B cell (primary cell): ENCODE measurements at regions of chr4 and their contacts with region 1.

Region 1: GRCh38 chr4:70993181-70994068 is at the start of gene DCK:
- DNase-seq: peak; percentile 92
- ATAC-seq: peak; percentile 82
- H3K4me3 ChIP-seq: peak within 1 kb of the TSS; percentile 85 to 99 (median 97)
- H3K4me3 Mint-ChIP-seq: peak within 1 kb of the TSS; percentile 97
- H3K27ac ChIP-seq: peak within 1 kb of the TSS; percentile 86 to 94
- H3K27ac Mint-ChIP-seq: peak within 1 kb of the TSS; percentile 96
- H3K4me1 ChIP-seq: peaks cover 39 to 40% of the 10 kb centered on the region in 2 donors
- H3K4me1 Mint-ChIP-seq: peaks cover 52% of the 10 kb centered on the region
- H3K27me3 ChIP-seq: no peaks in the 10 kb centered on the region
- H3K27me3 Mint-ChIP-seq: no peaks in the 10 kb centered on the region
- CTCF ChIP-seq: no peak
- total RNA-seq, gene DCK: 58.2 and 64.7 TPM in 2 replicates

Region 2: GRCh38 chr4:70687821-70688794 is 305.3 kb before region 1 on chr4 and contains the start of gene UTP3:
- CTCF ChIA-PET with region 1: interaction called, 4 read pairs
- POLR2A ChIA-PET with region 1: no interaction called
- intact Hi-C with region 1: loop called (anchors 1 kb)
- DNase-seq: peak; percentile 96
- ATAC-seq: peak; percentile 90
- H3K4me3 ChIP-seq: peak within 1 kb of the TSS; percentile 66 to 97 (median 92)
- H3K4me3 Mint-ChIP-seq: peak within 1 kb of the TSS; percentile 100
- H3K27ac ChIP-seq: peak within 1 kb of the TSS; percentile 96 to 98
- H3K27ac Mint-ChIP-seq: peak within 1 kb of the TSS; percentile 100
- H3K4me1 ChIP-seq: peaks cover 24 to 32% of the 10 kb centered on the region in 2 donors
- H3K4me1 Mint-ChIP-seq: peaks cover 37% of the 10 kb centered on the region
- H3K27me3 ChIP-seq: no peaks in the 10 kb centered on the region
- H3K27me3 Mint-ChIP-seq: no peaks in the 10 kb centered on the region
- CTCF ChIP-seq: peak; percentile 98
- total RNA-seq, gene UTP3: 42.0 and 42.2 TPM in 2 replicates

Region 3: DNA sequence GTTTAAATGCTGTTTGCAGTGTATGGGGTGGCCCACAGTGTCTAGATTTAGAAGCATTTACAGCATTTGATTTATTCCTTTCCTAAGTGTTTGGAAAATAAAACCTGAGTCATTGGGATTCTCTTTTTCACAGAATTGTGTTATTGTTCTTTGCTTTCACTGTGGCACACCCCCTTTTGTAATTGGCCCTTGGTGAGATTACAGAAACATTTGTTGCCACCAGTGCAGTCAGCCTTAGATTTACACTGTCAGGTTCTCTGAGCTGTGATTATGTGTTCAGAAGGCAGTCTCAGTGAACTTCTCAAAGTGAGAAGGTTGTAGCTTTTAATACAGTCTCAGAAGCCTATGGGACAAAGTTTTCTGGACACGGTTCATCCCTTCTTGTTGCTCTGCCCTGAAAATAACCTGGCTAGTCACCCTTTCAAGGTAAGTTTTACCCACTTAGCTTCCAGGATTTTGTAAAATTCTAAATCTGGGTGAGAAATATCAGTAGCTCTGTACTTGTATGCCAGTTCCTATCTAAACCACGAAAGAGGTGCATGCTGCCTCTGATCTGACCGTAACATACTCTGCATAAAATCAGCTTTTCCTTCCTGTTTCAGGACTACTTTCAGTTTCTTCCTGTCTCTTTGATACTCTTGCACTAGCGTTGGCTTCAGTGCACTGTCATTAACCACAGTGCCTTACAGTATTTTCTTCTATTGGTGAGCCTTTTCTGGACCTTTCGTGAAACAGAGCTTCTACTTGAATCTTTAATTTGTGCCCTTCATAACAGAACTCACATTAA is 259.1 kb before region 1 on chr4:
- CTCF ChIA-PET with region 1: interaction called, 6 read pairs
- POLR2A ChIA-PET with region 1: no interaction called
- intact Hi-C with region 1: loop called (anchors 10 kb)
- DNase-seq: peak; percentile 81
- ATAC-seq: peak; percentile 95
- H3K4me3 ChIP-seq: peak overlapping the region; percentile 5 to 74 (median 37)
- H3K4me3 Mint-ChIP-seq: peak overlapping the region; percentile 73
- H3K27ac ChIP-seq: peak overlapping the region; percentile 70 to 74
- H3K27ac Mint-ChIP-seq: peak overlapping the region; percentile 92
- H3K4me1 ChIP-seq: peaks cover 44 to 45% of the 10 kb centered on the region in 2 donors
- H3K4me1 Mint-ChIP-seq: peaks cover 44% of the 10 kb centered on the region
- H3K27me3 ChIP-seq: no peaks in the 10 kb centered on the region
- H3K27me3 Mint-ChIP-seq: no peaks in the 10 kb centered on the region
- CTCF ChIP-seq: no peak

Region 4: GRCh38 chr4:70801265-70801809 is 192.1 kb before region 1 on chr4:
- CTCF ChIA-PET with region 1: no interaction called
- POLR2A ChIA-PET with region 1: no interaction called
- intact Hi-C with region 1: no loop called
- DNase-seq: no peak
- ATAC-seq: no peak
- H3K4me3 ChIP-seq: no peak overlapping the region
- H3K4me3 Mint-ChIP-seq: no peak overlapping the region
- H3K27ac ChIP-seq: no peak overlapping the region
- H3K27ac Mint-ChIP-seq: no peak overlapping the region
- H3K4me1 ChIP-seq: no peaks in the 10 kb centered on the region
- H3K4me1 Mint-ChIP-seq: no peaks in the 10 kb centered on the region
- H3K27me3 ChIP-seq: no peaks in the 10 kb centered on the region
- H3K27me3 Mint-ChIP-seq: no peaks in the 10 kb centered on the region
- CTCF ChIP-seq: no peak

Region 5: DNA sequence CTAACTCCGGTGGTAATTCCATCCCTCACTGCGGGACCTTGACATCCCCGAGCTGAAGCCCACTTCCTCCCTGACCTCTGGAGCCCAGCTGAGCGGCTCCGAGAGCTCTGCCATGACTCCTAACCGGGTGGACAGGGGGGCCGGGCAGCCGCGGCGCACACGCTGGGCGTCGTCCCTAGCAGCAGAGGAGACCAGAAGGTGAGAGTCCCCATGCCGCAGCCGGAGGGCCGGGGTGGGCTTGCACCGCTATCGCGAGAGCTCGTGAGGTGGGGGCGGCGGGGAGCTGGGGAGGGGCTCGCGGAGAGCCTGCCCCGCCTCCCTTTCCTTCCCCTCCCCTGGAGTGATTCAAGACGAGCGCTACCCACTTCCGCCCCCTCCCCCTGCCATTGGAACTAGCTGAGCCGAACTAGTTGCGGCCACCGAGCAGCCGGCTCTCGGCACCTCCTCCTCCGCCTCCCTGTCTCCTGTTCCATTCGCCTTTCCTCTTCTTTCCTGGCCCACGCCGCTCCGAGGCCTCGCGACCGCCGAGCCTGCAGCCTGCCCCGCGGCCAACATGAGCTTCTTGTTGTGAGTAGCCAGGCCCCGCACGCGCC is 91.3 kb before region 1 on chr4 and contains the start of gene MOB1B:
- CTCF ChIA-PET with region 1: interaction called, 3 read pairs
- POLR2A ChIA-PET with region 1: interaction called, 11 read pairs
- intact Hi-C with region 1: loop called (anchors 2 kb)
- DNase-seq: peak; percentile 85
- ATAC-seq: peak; percentile 95
- H3K4me3 ChIP-seq: peak within 1 kb of the TSS; percentile 72 to 98 (median 77)
- H3K4me3 Mint-ChIP-seq: peak within 1 kb of the TSS; percentile 99
- H3K27ac ChIP-seq: peak within 1 kb of the TSS; percentile 41 to 76
- H3K27ac Mint-ChIP-seq: peak within 1 kb of the TSS; percentile 89
- H3K4me1 ChIP-seq: peaks cover 13% of the 10 kb centered on the region in 2 donors
- H3K4me1 Mint-ChIP-seq: peaks cover 29% of the 10 kb centered on the region
- H3K27me3 ChIP-seq: no peaks in the 10 kb centered on the region
- H3K27me3 Mint-ChIP-seq: no peaks in the 10 kb centered on the region
- CTCF ChIP-seq: peak; percentile 61
- total RNA-seq, gene MOB1B: 30.4 and 32.4 TPM in 2 replicates

Region 6: DNA sequence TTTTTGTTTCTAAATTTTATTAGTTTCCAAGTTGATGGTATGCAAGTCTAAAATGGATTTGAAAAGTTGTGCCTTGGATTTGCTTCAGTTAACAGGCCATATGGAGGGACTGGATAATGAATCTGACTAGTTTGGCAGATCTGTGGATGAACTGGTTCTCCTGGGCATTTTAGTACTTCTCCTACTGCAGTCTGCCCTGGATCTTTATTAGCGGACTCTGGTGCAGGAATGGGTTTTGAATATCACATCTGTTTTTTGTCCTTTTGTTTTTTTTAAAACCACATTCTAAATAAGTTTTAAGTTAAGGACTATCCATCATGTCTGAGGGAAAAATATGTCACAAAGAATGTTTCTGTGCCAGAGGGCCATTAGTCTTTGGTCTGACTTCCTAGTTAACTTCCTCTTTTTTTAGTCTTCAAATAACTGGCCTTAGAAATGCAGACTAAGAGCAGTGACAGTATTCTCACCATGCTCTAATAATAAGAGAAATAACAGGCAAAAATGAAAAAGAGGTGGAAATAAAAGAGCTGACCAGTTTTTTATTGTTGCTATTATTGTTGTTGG is 13.9 kb before region 1 on chr4:
- CTCF ChIA-PET with region 1: interaction called, 12 read pairs
- POLR2A ChIA-PET with region 1: no interaction called
- intact Hi-C with region 1: loop called (anchors 2 kb)
- DNase-seq: peak; percentile 53
- ATAC-seq: peak; percentile 47
- H3K4me3 ChIP-seq: no peak overlapping the region
- H3K4me3 Mint-ChIP-seq: peak overlapping the region; percentile 21
- H3K27ac ChIP-seq: peak overlapping the region in 1 of 2 donors; percentile 55
- H3K27ac Mint-ChIP-seq: peak overlapping the region; percentile 34
- H3K4me1 ChIP-seq: peaks cover 12 to 13% of the 10 kb centered on the region in 2 donors
- H3K4me1 Mint-ChIP-seq: peaks cover 17% of the 10 kb centered on the region
- H3K27me3 ChIP-seq: no peaks in the 10 kb centered on the region
- H3K27me3 Mint-ChIP-seq: no peaks in the 10 kb centered on the region
- CTCF ChIP-seq: no peak

Region 7: GRCh38 chr4:71009890-71010588 is 16.6 kb after region 1 on chr4:
- CTCF ChIA-PET with region 1: interaction called, 245 read pairs
- POLR2A ChIA-PET with region 1: interaction called, 43 read pairs
- intact Hi-C with region 1: loop called (anchors 1 kb)
- DNase-seq: peak; percentile 76
- ATAC-seq: peak; percentile 51
- H3K4me3 ChIP-seq: no peak overlapping the region
- H3K4me3 Mint-ChIP-seq: peak overlapping the region; percentile 59
- H3K27ac ChIP-seq: peak overlapping the region in 1 of 2 donors; percentile 93
- H3K27ac Mint-ChIP-seq: peak overlapping the region; percentile 76
- H3K4me1 ChIP-seq: peaks cover 39 to 42% of the 10 kb centered on the region in 2 donors
- H3K4me1 Mint-ChIP-seq: peaks cover 49% of the 10 kb centered on the region
- H3K27me3 ChIP-seq: no peaks in the 10 kb centered on the region
- H3K27me3 Mint-ChIP-seq: no peaks in the 10 kb centered on the region
- CTCF ChIP-seq: peak; percentile 85